OCI-LY7 (cell line): ENCODE measurements at regions of chr15 and their contacts with region 1.

Region 1: GRCh38 chr15:90774731-90775484 is 57.8 kb downstream of the BLM start:
- DNase-seq: no peak
- H3K4me3 ChIP-seq: no peak overlapping the region
- H3K27ac ChIP-seq: no peak overlapping the region
- H3K4me1 ChIP-seq: peaks cover 7% of the 10 kb centered on the region
- CTCF ChIP-seq: no peak

Region 2: DNA sequence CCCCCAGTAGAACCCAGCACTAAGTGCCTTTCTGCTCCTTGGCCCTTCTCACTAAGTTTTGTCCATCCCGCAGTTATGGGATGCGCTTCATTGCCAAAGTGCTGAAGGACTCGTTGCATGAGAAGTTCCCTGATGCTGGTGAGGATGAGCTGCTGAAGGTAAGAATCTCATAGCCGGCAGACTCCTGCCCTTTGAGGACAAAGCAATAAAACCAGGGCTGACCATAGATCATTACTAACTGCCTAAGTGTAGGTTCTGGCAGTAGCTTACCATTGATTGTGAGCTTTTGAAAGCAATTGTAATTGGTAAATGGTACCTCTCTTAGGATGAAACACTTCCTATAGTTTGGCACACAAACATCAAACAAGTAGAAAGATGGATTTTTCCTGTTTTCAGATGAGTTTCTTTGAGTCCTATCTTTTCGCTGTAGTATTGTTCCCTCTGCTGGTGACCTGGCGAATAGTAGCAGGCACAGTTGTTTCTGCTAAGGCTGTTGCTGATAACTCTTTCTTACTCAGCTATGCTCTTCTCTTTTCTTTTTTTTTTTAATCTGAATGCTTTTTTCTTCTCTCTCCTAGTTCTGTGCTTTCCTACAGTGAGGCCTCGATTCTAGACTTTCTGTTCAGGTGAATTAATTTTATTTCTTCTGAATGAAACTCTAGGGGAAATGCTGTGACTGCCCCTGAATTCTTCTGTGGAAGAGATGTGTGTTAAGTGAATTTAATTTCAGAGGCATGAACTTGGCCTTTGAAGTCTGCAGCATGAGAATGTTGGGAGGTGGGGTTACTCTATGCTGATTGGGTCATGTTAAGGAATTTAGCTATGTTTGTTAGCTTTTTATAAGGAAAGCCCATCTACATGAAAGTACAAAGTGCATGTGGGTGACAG is 292.5 kb before region 1 on chr15:
- CTCF ChIA-PET with region 1: no interaction called
- POLR2A ChIA-PET with region 1: no interaction called
- intact Hi-C with region 1: no loop called
- DNase-seq: peak; percentile 60
- H3K4me3 ChIP-seq: no peak overlapping the region
- H3K27ac ChIP-seq: no peak overlapping the region
- H3K4me1 ChIP-seq: peaks cover 22% of the 10 kb centered on the region
- CTCF ChIP-seq: peak; percentile 94

Region 3: GRCh38 chr15:90750186-90750585 is 24.7 kb before region 1 on chr15:
- CTCF ChIA-PET with region 1: no interaction called
- POLR2A ChIA-PET with region 1: interaction called, 3 read pairs
- intact Hi-C with region 1: loop called (anchors 2 kb)
- DNase-seq: no peak
- H3K4me3 ChIP-seq: no peak overlapping the region
- H3K27ac ChIP-seq: no peak overlapping the region
- H3K4me1 ChIP-seq: no peaks in the 10 kb centered on the region
- CTCF ChIP-seq: no peak